ENCODE measurements at regions of chr6 and their contacts with region 1.

Region 1: DNA sequence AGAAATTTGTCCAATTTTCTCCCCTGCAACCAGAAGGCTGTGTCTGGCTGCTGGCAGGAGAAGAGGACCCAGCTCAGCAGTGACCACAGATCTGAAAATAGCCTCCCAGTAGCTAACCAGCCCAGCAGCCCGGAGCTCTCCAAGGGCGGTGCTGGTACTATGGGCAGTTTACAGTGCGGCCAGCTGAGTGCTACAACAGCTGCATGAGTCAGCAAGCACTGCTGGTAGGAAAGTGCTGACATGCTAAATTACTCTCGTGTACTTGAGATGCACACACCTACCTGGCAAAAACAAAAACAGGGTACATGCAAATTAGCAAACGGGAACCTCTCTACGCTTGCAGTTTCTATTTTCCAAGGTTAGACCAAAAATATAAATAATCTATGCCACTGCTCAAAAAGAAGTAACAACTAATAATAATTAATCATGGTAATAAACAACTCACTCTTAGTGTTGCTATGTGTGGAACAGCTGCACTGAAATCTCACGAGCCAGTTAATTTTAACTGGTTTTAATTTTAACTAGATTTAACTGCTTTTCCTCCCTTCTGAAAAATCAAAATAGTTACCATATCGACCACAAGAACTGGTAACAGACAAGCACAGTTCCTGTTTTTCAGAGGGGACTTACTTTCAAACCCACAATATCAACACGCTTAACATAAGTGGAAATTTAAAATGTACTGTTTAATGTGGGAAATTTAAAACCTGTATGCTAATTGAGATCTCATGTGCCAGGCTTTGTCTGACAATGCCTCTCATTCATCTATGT is 10.8 kb downstream of the BACH2 start:
- DNase-seq: peak; percentile 82 to 92 (median 89)
- ATAC-seq: peak; percentile 99 to 100
- H3K4me3 ChIP-seq: peak overlapping the region; percentile 29
- H3K27ac ChIP-seq: no peak overlapping the region
- H3K4me1 ChIP-seq: peaks cover 5% of the 10 kb centered on the region
- H3K27me3 ChIP-seq: no peaks in the 10 kb centered on the region

Region 2: DNA sequence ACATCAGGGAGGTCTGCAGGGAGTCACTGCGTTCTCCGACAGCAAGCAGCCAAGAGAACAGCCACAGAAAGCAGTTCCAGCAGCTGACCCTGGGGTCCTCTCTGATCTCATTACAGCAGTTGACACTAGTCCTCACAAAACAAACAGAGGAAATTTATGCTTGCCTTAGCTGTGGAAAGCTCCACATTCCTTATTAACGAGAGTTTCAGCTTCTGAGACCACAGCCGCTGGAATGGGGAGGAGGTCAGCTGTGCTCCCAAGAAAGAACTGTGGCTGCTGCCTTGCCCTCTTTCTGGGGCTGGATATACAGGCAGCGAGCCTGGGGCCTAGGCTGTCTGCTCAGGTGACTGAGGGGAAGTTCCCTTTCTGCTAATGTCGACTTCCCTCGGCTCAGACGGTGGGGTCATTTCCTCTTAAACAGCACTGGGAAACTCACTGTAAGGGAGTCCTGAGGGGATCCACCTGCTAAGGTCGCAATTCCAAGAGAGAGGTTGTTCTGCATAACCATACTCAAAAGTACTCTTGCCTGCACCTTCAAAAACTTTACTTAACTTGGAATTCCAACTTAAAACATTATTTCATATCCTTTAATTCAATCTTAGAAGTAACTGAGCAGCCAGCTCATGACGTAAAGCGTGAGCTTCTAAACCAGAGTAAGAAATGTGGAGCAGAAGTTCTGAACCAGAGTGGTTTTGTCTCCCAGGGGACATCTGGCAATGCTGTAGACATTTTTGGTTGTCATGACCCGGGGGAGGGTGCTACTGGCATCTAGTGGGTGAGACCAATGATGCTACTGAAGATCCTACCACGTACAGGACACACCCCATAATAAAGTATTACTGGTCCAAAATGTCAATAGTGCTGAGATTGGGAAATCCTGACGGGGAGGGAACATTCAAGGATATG is 69.5 kb before region 1 on chr6:
- intact Hi-C with region 1: loop called in 1 of 4 experiments (anchors 10 kb)
- DNase-seq: peak in 1 of 3 donors; percentile 47
- ATAC-seq: no peak
- H3K4me3 ChIP-seq: no peak overlapping the region
- H3K27ac ChIP-seq: no peak overlapping the region
- H3K4me1 ChIP-seq: peaks cover 10% of the 10 kb centered on the region
- H3K27me3 ChIP-seq: no peaks in the 10 kb centered on the region

Region 3: GRCh38 chr6:90411292-90411781 is 125.5 kb after region 1 on chr6:
- intact Hi-C with region 1: no loop called
- DNase-seq: no peak
- ATAC-seq: no peak
- H3K4me3 ChIP-seq: no peak overlapping the region
- H3K27ac ChIP-seq: no peak overlapping the region
- H3K4me1 ChIP-seq: no peaks in the 10 kb centered on the region
- H3K27me3 ChIP-seq: no peaks in the 10 kb centered on the region

Region 4: GRCh38 chr6:90478789-90479602 is 193.2 kb after region 1 on chr6:
- intact Hi-C with region 1: loop called in 1 of 4 experiments (anchors 10 kb)
- DNase-seq: peak; percentile 89 to 93 (median 91)
- ATAC-seq: peak; percentile 99 to 100
- H3K4me3 ChIP-seq: no peak overlapping the region
- H3K27ac ChIP-seq: no peak overlapping the region
- H3K4me1 ChIP-seq: peaks cover 3% of the 10 kb centered on the region
- H3K27me3 ChIP-seq: no peaks in the 10 kb centered on the region

Region 5: DNA sequence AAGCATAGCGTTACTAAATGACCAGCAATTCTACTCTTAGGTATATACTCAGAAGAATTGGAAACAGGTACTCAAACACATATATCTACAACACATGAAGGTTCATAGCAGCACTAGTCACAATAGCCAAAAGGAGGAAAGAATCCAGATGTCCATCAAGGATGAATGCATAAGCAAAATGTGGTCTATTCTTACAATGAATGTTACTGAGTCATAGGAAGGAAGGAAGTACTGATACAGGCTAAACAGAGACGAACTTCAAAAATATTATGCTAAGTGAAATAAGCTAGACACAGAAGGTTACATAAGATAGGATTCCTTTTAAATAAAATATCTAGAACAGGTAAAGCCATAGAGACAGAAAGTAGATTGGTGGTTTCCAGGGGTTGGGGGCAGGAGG is 207.5 kb after region 1 on chr6:
- intact Hi-C with region 1: no loop called
- DNase-seq: no peak
- ATAC-seq: peak in 1 of 2 donors; percentile 66
- H3K4me3 ChIP-seq: no peak overlapping the region
- H3K27ac ChIP-seq: no peak overlapping the region
- H3K4me1 ChIP-seq: no peaks in the 10 kb centered on the region
- H3K27me3 ChIP-seq: no peaks in the 10 kb centered on the region

Measured in right cardiac atrium (tissue), 5 donors.